ENCODE measurements at regions of chr3 and their contacts with region 1.

Region 1: GRCh38 chr3:97821810-97822775 is at the start of gene CRYBG3:
- DNase-seq: peak; percentile 81
- H3K4me3 ChIP-seq: peak within 1 kb of the TSS; percentile 55 to 81
- H3K27ac ChIP-seq: peak within 1 kb of the TSS; percentile 79 to 85
- H3K4me1 ChIP-seq: no peaks in the 10 kb centered on the region
- H3K27me3 ChIP-seq: no peaks in the 10 kb centered on the region
- CTCF ChIP-seq: no peak
- POLR2A ChIP-seq: peak; percentile 88
- total RNA-seq, gene CRYBG3: 22.0 to 23.5 TPM

Region 2: GRCh38 chr3:97778152-97778551 is 43.9 kb before region 1 on chr3:
- intact Hi-C with region 1: no loop called
- DNase-seq: no peak
- H3K4me3 ChIP-seq: no peak overlapping the region
- H3K27ac ChIP-seq: no peak overlapping the region
- H3K4me1 ChIP-seq: no peaks in the 10 kb centered on the region
- H3K27me3 ChIP-seq: no peaks in the 10 kb centered on the region
- CTCF ChIP-seq: no peak
- POLR2A ChIP-seq: no peak

Region 3: DNA sequence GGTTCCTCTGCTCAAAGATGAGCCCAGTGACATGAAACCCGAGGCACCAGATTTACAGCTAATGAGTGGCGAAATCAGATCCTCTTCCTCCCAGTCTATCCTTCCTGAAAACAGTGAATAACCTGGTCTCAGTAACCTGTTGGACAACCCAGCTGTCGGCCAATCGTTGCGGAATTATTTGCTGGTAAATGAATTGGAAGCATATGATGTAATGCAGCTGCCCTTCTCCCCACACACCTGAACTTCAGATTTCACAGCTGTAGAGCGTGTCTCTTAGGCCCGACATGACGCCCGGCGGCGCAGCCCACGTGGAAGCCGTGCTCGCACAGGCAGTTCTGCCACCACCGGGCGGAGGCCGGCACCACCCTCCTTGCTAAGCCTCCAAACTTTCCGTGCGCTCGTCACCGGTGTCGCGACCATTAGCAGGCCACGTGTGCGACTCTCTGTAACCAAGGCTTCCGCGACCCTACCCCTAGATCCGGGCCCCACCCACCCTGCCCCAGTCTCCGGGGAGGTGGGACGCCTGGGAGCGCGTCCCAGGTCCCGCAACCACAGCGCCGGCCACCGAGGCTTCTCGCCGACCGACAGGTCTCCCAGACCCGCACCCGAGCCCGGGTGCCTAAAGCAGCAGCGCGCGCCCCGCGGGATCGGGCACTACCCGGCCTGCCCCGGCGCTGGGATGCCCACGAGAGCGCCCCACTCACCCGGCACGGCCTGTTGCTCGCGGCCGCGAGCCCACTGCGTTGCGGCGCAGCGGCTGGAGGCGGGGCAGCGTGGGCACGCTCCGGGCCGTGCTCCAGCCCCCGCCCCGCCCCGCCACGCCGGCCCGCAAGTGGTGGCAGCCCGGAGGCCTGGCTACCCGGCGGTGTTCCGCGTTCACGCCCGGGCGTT is 149.8 kb after region 1 on chr3 and contains the start of gene RIOX2:
- intact Hi-C with region 1: loop called (anchors 5 kb)
- DNase-seq: peak; percentile 75
- H3K4me3 ChIP-seq: peak within 1 kb of the TSS; percentile 57 to 65
- H3K27ac ChIP-seq: peak within 1 kb of the TSS; percentile 75 to 85
- H3K4me1 ChIP-seq: no peaks in the 10 kb centered on the region
- H3K27me3 ChIP-seq: no peaks in the 10 kb centered on the region
- CTCF ChIP-seq: peak in 1 of 4 experiments; percentile 9
- POLR2A ChIP-seq: peak; percentile 32
- total RNA-seq, gene RIOX2: 18.1 to 20.2 TPM

Region 4: GRCh38 chr3:98136631-98137030 is 314.5 kb after region 1 on chr3:
- intact Hi-C with region 1: no loop called
- DNase-seq: no peak
- H3K4me3 ChIP-seq: no peak overlapping the region
- H3K27ac ChIP-seq: no peak overlapping the region
- H3K4me1 ChIP-seq: no peaks in the 10 kb centered on the region
- H3K27me3 ChIP-seq: no peaks in the 10 kb centered on the region
- CTCF ChIP-seq: no peak
- POLR2A ChIP-seq: no peak

Measured in prostate gland (tissue), 2 donors.